ENCODE measurements at regions of chr19 and their contacts with region 1.

Region 1: DNA sequence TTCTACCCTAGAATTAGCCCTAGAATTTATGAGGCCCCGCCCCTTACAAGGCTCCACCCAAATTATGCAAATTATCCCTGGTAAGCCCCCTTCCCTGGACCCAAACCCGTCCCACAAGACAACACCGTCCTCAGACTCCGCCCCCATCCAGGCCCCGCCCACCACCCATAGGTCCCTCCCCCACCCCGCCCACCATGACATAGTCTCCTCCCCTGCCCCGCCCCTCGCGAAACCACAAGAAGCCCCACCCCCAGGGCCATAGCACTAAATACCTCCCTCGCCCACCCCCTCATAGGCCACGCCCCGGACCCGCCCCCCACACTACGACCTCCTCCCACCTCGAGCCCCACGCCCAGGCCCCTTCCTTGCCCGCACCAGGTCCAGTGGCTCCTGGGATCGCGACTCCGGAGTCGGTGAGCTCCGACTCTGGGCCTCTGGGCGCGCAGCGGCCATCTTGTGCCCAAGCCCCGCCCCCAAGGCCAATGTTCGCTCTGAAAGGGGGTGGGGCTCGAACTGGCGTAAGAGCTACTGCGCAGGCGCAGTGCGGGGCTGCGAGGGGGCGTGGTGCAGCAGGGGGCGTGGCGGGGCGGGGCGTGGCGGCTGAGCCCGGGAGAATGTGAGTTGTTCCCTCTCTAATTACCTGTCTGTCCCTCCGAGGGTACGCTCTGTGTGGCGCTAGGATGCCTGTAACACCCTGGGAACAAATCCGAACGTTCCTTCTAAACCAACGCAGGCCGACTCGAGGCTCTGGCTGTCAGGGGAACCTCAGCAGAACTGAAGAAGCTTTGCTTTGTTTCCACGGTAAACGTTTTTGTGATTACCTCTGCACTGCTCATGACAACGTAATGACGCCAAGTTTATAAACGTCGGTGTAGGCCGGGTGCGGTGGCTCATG is at the start of gene ZNF784:
- DNase-seq: peak; percentile 95 to 97 (median 97)
- ATAC-seq: peak; percentile 88
- H3K4me3 ChIP-seq: peak within 1 kb of the TSS; percentile 53
- H3K27ac ChIP-seq: peak within 1 kb of the TSS; percentile 93
- H3K4me1 ChIP-seq: peaks cover 9 to 11% of the 10 kb centered on the region in 2 experiments; a peak in 4 of 5 replicates
- H3K27me3 ChIP-seq: no peaks in the 10 kb centered on the region
- CTCF ChIP-seq: peak in 1 of 3 experiments; percentile 2; a peak in 2 of 6 replicates
- EP300 ChIP-seq: no peak
- POLR2A ChIP-seq: peak; percentile 87
- RAD21 ChIP-seq: no peak
- polyA plus RNA-seq, gene ZNF784: 0.14 to 0.17 TPM

Region 2: GRCh38 chr19:55146078-55146704 is 478.2 kb before region 1 on chr19:
- CTCF ChIA-PET with region 1: no interaction called
- POLR2A ChIA-PET with region 1: no interaction called
- in situ Hi-C with region 1: loop called (anchors 25 kb)
- intact Hi-C with region 1: no loop called
- DNase-seq: peak; percentile 88 to 92 (median 90)
- ATAC-seq: peak; percentile 87
- H3K4me3 ChIP-seq: peak overlapping the region; percentile 88
- H3K27ac ChIP-seq: peak overlapping the region; percentile 69
- H3K4me1 ChIP-seq: peaks cover 16 to 54% of the 10 kb centered on the region in 2 experiments
- H3K27me3 ChIP-seq: no peaks in the 10 kb centered on the region
- CTCF ChIP-seq: peak; percentile 84 to 93 (median 85)
- EP300 ChIP-seq: peak; percentile 57; the same call in 1 of the 2 replicates
- POLR2A ChIP-seq: no peak
- RAD21 ChIP-seq: peak; percentile 43 to 53

Region 3: GRCh38 chr19:55279770-55280643 is 344.3 kb before region 1 on chr19 and contains the start of gene HSPBP1:
- CTCF ChIA-PET with region 1: no interaction called
- POLR2A ChIA-PET with region 1: no interaction called
- in situ Hi-C with region 1: loop called (anchors 10 kb)
- intact Hi-C with region 1: no loop called
- DNase-seq: peak; percentile 91 to 97 (median 94)
- ATAC-seq: peak; percentile 92
- H3K4me3 ChIP-seq: peak within 1 kb of the TSS; percentile 65
- H3K27ac ChIP-seq: peak within 1 kb of the TSS; percentile 79
- H3K4me1 ChIP-seq: peaks cover 19 to 28% of the 10 kb centered on the region in 2 experiments
- H3K27me3 ChIP-seq: no peaks in the 10 kb centered on the region
- CTCF ChIP-seq: 0 out of 6 replicates have a peak, but pooled peaks of 1 of the 3 experiments have one; percentile 1
- EP300 ChIP-seq: no peak
- POLR2A ChIP-seq: peak; percentile 76
- RAD21 ChIP-seq: no peak
- polyA plus RNA-seq, gene HSPBP1: 0.83 to 1.5 TPM

Region 4: GRCh38 chr19:55516878-55517620 is 107.3 kb before region 1 on chr19:
- CTCF ChIA-PET with region 1: no interaction called
- POLR2A ChIA-PET with region 1: interaction called, 4 read pairs
- in situ Hi-C with region 1: loop called (anchors 5 kb)
- intact Hi-C with region 1: no loop called
- DNase-seq: peak; percentile 95 to 100 (median 100)
- ATAC-seq: peak; percentile 100
- H3K4me3 ChIP-seq: peak overlapping the region; percentile 42
- H3K27ac ChIP-seq: peak overlapping the region; percentile 76
- H3K4me1 ChIP-seq: peaks cover 3 to 22% of the 10 kb centered on the region in 2 experiments; a peak in 3 of 5 replicates
- H3K27me3 ChIP-seq: peaks cover 3 to 16% of the 10 kb centered on the region in 2 experiments; a peak in 3 of 5 replicates
- CTCF ChIP-seq: peak; percentile 90 to 96 (median 96)
- EP300 ChIP-seq: no peak
- POLR2A ChIP-seq: 0 out of 2 replicates have a peak, but pooled peaks have one; percentile 49
- RAD21 ChIP-seq: peak; percentile 98 to 99

Region 5: DNA sequence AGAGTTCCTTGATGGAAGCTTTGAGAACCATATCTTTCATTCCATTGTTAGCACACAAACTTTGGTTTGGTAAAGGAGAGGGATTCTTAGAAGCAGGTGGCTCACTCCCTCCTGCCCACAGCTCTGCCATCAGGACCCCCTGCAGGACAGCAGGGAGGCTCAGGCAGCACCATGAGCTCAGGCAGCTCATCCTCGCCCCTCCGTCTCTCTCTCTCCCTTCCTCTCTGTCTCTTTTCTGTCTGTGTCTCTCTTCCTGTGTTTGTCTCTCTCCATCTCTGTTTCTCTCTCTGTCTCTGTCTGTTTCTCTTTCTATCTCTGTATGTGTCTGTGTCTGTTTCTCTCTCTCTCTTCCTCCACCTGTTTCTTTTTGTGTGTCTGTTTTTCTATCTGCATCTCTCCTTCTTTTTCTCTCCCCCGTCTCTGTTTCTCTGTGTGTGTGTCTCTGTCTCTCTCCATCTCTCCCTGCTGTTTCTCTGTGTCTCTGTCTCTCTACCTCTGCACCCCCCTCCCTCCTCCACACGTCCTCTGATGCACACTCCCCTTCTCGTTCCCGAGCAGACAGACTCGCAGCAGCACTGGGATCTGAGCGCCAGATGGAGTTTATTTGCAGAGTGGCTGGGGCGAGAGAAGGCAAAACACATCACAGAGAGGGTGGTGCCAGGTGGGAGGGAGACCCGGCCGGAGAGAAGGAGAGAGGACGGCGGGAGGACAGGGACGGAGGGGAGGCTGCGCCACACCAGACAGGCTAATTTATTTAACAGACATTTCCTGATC is 96.1 kb before region 1 on chr19:
- CTCF ChIA-PET with region 1: no interaction called
- POLR2A ChIA-PET with region 1: no interaction called
- in situ Hi-C with region 1: no loop called
- intact Hi-C with region 1: no loop called
- DNase-seq: no peak
- ATAC-seq: no peak
- H3K4me3 ChIP-seq: no peak overlapping the region
- H3K27ac ChIP-seq: no peak overlapping the region
- H3K4me1 ChIP-seq: peaks cover 0 to 31% of the 10 kb centered on the region in 2 experiments; a peak in 3 of 5 replicates
- H3K27me3 ChIP-seq: no peaks in the 10 kb centered on the region; a peak in 2 of 5 replicates
- CTCF ChIP-seq: no peak
- EP300 ChIP-seq: no peak
- POLR2A ChIP-seq: no peak
- RAD21 ChIP-seq: no peak

Region 6: GRCh38 chr19:55605207-55605636 is 19.1 kb before region 1 on chr19:
- CTCF ChIA-PET with region 1: no interaction called
- POLR2A ChIA-PET with region 1: interaction called, 18 read pairs
- in situ Hi-C with region 1: no loop called
- intact Hi-C with region 1: no loop called
- DNase-seq: peak; percentile 88 to 98 (median 92)
- ATAC-seq: peak; percentile 89
- H3K4me3 ChIP-seq: peak overlapping the region; percentile 84
- H3K27ac ChIP-seq: peak overlapping the region; percentile 87
- H3K4me1 ChIP-seq: peaks cover 27 to 44% of the 10 kb centered on the region in 2 experiments
- H3K27me3 ChIP-seq: no peaks in the 10 kb centered on the region
- CTCF ChIP-seq: no peak
- EP300 ChIP-seq: no peak
- POLR2A ChIP-seq: no peak; the same call in 1 of the 2 replicates
- RAD21 ChIP-seq: no peak

Region 7: DNA sequence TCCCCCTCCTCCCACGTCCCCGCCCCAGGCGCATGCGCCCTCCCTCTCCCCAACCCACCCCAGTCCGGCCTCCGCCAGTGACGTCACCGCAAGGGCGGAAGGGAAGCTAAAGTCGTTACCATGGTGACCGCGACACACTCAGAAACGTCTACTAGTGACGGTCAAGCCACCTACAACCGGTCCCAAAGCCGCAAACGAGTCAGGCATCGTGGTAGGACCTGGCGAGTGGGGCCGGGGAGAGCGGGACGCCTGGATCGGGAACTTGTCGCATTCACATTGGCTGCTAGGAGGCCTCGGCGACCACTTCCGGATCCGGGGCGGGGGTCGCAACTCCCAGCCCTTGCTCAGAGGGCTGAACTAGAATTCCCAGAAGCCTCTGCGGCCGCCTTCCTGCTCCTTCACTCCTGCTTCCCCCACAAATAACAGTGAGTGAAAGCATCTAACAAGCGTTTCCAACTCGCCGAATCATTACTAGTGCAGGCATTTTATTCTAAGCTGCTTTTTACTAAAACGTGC is 690.3 kb after region 1 on chr19 and contains the start of gene ZSCAN5A:
- CTCF ChIA-PET with region 1: no interaction called
- POLR2A ChIA-PET with region 1: no interaction called
- in situ Hi-C with region 1: loop called (anchors 25 kb)
- intact Hi-C with region 1: no loop called
- DNase-seq: peak; percentile 97 to 99 (median 99)
- ATAC-seq: peak; percentile 86
- H3K4me3 ChIP-seq: peak within 1 kb of the TSS; percentile 77
- H3K27ac ChIP-seq: peak within 1 kb of the TSS; percentile 99
- H3K4me1 ChIP-seq: peaks cover 15 to 17% of the 10 kb centered on the region in 2 experiments
- H3K27me3 ChIP-seq: no peaks in the 10 kb centered on the region
- CTCF ChIP-seq: no peak
- EP300 ChIP-seq: no peak
- POLR2A ChIP-seq: peak; percentile 75
- RAD21 ChIP-seq: no peak
- polyA plus RNA-seq, gene ZSCAN5A: 10.3 to 10.6 TPM

Measured in K562 (cell line).